ENCODE measurements at regions of chr18 and their contacts with region 1.

Region 1: DNA sequence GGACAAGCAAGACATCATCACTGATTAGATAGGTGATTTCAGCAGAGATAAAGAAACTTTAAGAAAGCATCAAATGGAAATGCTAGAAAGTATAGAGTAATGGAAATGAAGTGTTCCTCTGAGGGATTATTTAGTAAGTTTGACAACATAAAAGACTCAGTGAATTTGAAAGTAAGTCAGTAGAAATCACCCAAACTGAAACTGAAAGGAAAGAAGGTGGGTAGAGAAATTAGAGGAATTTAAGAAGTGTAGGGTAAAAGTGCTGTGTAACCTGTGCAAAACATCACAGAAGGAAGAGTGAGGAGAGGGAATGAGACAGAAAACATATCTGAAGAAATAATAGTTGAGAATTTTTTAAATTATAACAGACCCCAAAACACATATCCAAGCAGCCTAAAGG is 343.1 kb downstream of the CBLN2 start:
- DNase-seq: no peak

Region 2: DNA sequence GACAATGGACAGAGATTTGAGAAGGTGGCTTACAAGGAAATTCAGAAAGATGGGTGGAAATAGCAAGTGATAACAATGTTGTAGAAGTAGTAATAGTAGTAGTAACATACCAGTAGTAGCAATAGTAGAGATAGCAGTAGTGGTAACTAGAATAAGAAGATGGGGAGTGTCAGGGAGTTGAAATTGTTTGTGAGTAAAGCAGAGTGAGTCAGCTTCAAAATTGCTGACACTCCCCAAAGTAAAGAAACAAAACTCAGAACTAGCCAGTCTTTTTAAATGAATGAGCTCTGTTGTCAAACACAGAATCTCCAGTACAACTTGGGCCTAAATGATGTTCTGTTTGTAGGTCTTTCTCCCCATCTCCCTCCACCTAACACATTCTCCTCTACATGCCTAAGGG is 697.8 kb before region 1 on chr18:
- intact Hi-C with region 1: loop called in 1 of 2 experiments (anchors 5 kb)
- DNase-seq: no peak

Region 3: GRCh38 chr18:72171596-72171995 is 29.4 kb before region 1 on chr18:
- intact Hi-C with region 1: loop called in 1 of 2 experiments (anchors 1 kb)
- DNase-seq: no peak